Heart left ventricle (tissue), 16 donors: ENCODE measurements at regions of chr4 and their contacts with region 1.

Region 1: GRCh38 chr4:17823871-17824669 is 13.3 kb downstream of the NCAPG start:
- DNase-seq: no peak
- ATAC-seq: no peak
- H3K4me3 ChIP-seq: no peak overlapping the region
- H3K27ac ChIP-seq: no peak overlapping the region
- H3K4me1 ChIP-seq: no peaks in the 10 kb centered on the region
- H3K27me3 ChIP-seq: no peaks in the 10 kb centered on the region
- CTCF ChIP-seq: no peak
- POLR2A ChIP-seq: no peak

Region 2: GRCh38 chr4:16764622-16765021 is 1059.4 kb before region 1 on chr4:
- intact Hi-C with region 1: no loop called
- DNase-seq: no peak
- ATAC-seq: peak in 1 of 4 donors; percentile 30
- H3K4me3 ChIP-seq: no peak overlapping the region
- H3K27ac ChIP-seq: no peak overlapping the region
- H3K4me1 ChIP-seq: peaks cover 0 to 13% (median 0%) of the 10 kb centered on the region in 12 donors
- H3K27me3 ChIP-seq: no peaks in the 10 kb centered on the region
- CTCF ChIP-seq: peak in 4 of 12 donors; percentile 29 to 37 (median 34)
- POLR2A ChIP-seq: no peak

Region 3: GRCh38 chr4:18578307-18578706 is 754.2 kb after region 1 on chr4:
- intact Hi-C with region 1: loop called in 1 of 10 experiments (anchors 10 kb)
- DNase-seq: no peak
- ATAC-seq: no peak
- H3K4me3 ChIP-seq: no peak overlapping the region
- H3K27ac ChIP-seq: no peak overlapping the region
- H3K4me1 ChIP-seq: no peaks in the 10 kb centered on the region
- H3K27me3 ChIP-seq: peaks cover 0 to 13% (median 0%) of the 10 kb centered on the region in 9 donors
- CTCF ChIP-seq: no peak
- POLR2A ChIP-seq: no peak